ENCODE measurements at regions of chr11 and their contacts with region 1.

Region 1: GRCh38 chr11:134331354-134332188 is at the start of gene GLB1L2:
- DNase-seq: peak; percentile 69
- H3K4me3 Mint-ChIP-seq: peak within 1 kb of the TSS; percentile 80
- H3K27ac Mint-ChIP-seq: no peak within 1 kb of the TSS
- H3K4me1 Mint-ChIP-seq: peaks cover 7% of the 10 kb centered on the region
- H3K27me3 Mint-ChIP-seq: peaks cover 9% of the 10 kb centered on the region
- total RNA-seq, gene GLB1L2: 9.3 to 11.0 TPM

Region 2: GRCh38 chr11:134253188-134253993 is 78.2 kb before region 1 on chr11 and contains the starts of genes ACAD8 and THYN1:
- CTCF ChIA-PET with region 1: interaction called, 3 read pairs
- intact Hi-C with region 1: loop called (anchors 1 kb)
- DNase-seq: peak; percentile 97
- H3K4me3 Mint-ChIP-seq: peak within 1 kb of the TSS; percentile 90
- H3K27ac Mint-ChIP-seq: peak within 1 kb of the TSS; percentile 54
- H3K4me1 Mint-ChIP-seq: peaks cover 26% of the 10 kb centered on the region
- H3K27me3 Mint-ChIP-seq: no peaks in the 10 kb centered on the region
- total RNA-seq, gene ACAD8: 14.8 to 17.6 TPM
- total RNA-seq, gene THYN1: 85.6 to 92.6 TPM